Caco-2 (cell line): ENCODE measurements at regions of chr21 and their contacts with region 1.

Region 1: GRCh38 chr21:28283641-28284490 is 708.8 kb downstream of the LTN1 start:
- DNase-seq: peak; percentile 67 to 69
- H3K4me3 ChIP-seq: no peak overlapping the region
- H3K4me3 Mint-ChIP-seq: peak overlapping the region; percentile 28
- H3K27ac Mint-ChIP-seq: peak overlapping the region; percentile 0
- H3K4me1 ChIP-seq: peaks cover 23% of the 10 kb centered on the region
- H3K4me1 Mint-ChIP-seq: peaks cover 29% of the 10 kb centered on the region
- H3K27me3 ChIP-seq: no peaks in the 10 kb centered on the region
- H3K27me3 Mint-ChIP-seq: no peaks in the 10 kb centered on the region
- CTCF ChIP-seq: no peak

Region 2: DNA sequence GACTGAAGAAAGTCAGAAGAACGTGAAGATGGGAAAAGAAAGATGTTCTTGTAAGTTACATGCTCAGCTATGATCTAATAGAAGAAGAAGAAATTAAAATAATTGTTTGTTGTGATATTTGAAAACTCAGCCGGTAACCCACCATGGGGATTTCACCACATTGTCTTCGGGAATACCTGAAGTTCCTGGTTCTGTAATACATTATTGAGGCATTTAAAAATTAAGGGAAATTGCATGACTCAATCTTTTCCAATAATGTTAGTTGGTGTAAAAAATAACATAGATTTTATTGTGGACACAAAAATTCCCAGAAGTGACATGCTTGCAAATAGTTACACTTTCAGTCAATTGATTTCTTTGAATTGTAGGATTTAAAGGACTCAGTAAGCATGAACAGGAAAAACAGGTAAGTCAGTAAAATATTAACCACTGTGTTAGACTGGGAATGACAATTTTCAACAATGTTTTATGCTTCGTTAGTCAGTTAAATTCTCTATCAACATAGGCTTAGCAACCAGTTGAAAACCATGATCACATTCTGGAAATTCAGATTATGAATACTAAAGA is 36.3 kb before region 1 on chr21:
- CTCF ChIA-PET with region 1: no interaction called
- POLR2A ChIA-PET with region 1: no interaction called
- intact Hi-C with region 1: loop called (anchors 5 kb)
- DNase-seq: peak in 1 of 2 experiments; percentile 18
- H3K4me3 ChIP-seq: no peak overlapping the region
- H3K4me3 Mint-ChIP-seq: peak overlapping the region; percentile 32
- H3K27ac Mint-ChIP-seq: peak overlapping the region; percentile 60
- H3K4me1 ChIP-seq: peaks cover 40% of the 10 kb centered on the region
- H3K4me1 Mint-ChIP-seq: peaks cover 35% of the 10 kb centered on the region
- H3K27me3 ChIP-seq: no peaks in the 10 kb centered on the region
- H3K27me3 Mint-ChIP-seq: no peaks in the 10 kb centered on the region
- CTCF ChIP-seq: no peak

Region 3: GRCh38 chr21:28256420-28256831 is 27.4 kb before region 1 on chr21:
- CTCF ChIA-PET with region 1: interaction called, 8 read pairs
- POLR2A ChIA-PET with region 1: interaction called, 5 read pairs
- intact Hi-C with region 1: loop called (anchors 1 kb)
- DNase-seq: peak; percentile 79 to 86
- H3K4me3 ChIP-seq: no peak overlapping the region
- H3K4me3 Mint-ChIP-seq: peak overlapping the region; percentile 53
- H3K27ac Mint-ChIP-seq: peak overlapping the region; percentile 69
- H3K4me1 ChIP-seq: peaks cover 44% of the 10 kb centered on the region
- H3K4me1 Mint-ChIP-seq: peaks cover 44% of the 10 kb centered on the region
- H3K27me3 ChIP-seq: no peaks in the 10 kb centered on the region
- H3K27me3 Mint-ChIP-seq: no peaks in the 10 kb centered on the region
- CTCF ChIP-seq: no peak

Region 4: DNA sequence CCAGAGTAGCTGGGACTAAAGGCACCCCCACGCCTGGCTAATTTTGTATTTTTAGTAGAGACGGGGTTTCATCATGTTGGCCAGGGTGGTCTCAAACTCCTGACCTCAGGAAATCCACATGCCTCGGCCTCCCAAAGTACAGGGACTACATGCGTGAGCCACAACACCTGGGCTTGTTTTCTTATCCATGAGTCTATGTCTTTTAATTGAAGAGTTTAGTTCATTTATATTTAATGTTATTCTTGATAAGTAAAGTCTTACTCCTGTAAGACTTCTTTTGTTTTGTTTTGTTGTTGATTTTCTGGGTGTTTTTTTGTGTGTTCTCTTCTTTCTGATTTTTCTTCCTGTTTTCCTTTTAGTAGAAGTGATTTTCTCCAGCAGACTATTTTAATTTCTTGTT is 87.8 kb after region 1 on chr21:
- CTCF ChIA-PET with region 1: no interaction called
- POLR2A ChIA-PET with region 1: no interaction called
- intact Hi-C with region 1: no loop called
- DNase-seq: no peak
- H3K4me3 ChIP-seq: no peak overlapping the region
- H3K4me3 Mint-ChIP-seq: no peak overlapping the region
- H3K27ac Mint-ChIP-seq: no peak overlapping the region
- H3K4me1 ChIP-seq: peaks cover 9% of the 10 kb centered on the region
- H3K4me1 Mint-ChIP-seq: no peaks in the 10 kb centered on the region
- H3K27me3 ChIP-seq: no peaks in the 10 kb centered on the region
- H3K27me3 Mint-ChIP-seq: peaks cover 4% of the 10 kb centered on the region
- CTCF ChIP-seq: no peak

Region 5: GRCh38 chr21:28410256-28410655 is 126.4 kb after region 1 on chr21:
- CTCF ChIA-PET with region 1: no interaction called
- POLR2A ChIA-PET with region 1: no interaction called
- intact Hi-C with region 1: no loop called
- DNase-seq: no peak
- H3K4me3 ChIP-seq: no peak overlapping the region
- H3K4me3 Mint-ChIP-seq: no peak overlapping the region
- H3K27ac Mint-ChIP-seq: no peak overlapping the region
- H3K4me1 ChIP-seq: no peaks in the 10 kb centered on the region; the same call in 1 of the 2 replicates
- H3K4me1 Mint-ChIP-seq: no peaks in the 10 kb centered on the region
- H3K27me3 ChIP-seq: no peaks in the 10 kb centered on the region
- H3K27me3 Mint-ChIP-seq: no peaks in the 10 kb centered on the region
- CTCF ChIP-seq: no peak

Region 6: GRCh38 chr21:28740125-28740524 is 456.3 kb after region 1 on chr21:
- CTCF ChIA-PET with region 1: no interaction called
- POLR2A ChIA-PET with region 1: no interaction called
- intact Hi-C with region 1: no loop called
- DNase-seq: no peak
- H3K4me3 ChIP-seq: no peak overlapping the region
- H3K4me3 Mint-ChIP-seq: no peak overlapping the region
- H3K27ac Mint-ChIP-seq: no peak overlapping the region
- H3K4me1 ChIP-seq: no peaks in the 10 kb centered on the region
- H3K4me1 Mint-ChIP-seq: no peaks in the 10 kb centered on the region
- H3K27me3 ChIP-seq: no peaks in the 10 kb centered on the region
- H3K27me3 Mint-ChIP-seq: no peaks in the 10 kb centered on the region
- CTCF ChIP-seq: no peak